ENCODE measurements at regions of chr11 and their contacts with region 1.

Region 1: DNA sequence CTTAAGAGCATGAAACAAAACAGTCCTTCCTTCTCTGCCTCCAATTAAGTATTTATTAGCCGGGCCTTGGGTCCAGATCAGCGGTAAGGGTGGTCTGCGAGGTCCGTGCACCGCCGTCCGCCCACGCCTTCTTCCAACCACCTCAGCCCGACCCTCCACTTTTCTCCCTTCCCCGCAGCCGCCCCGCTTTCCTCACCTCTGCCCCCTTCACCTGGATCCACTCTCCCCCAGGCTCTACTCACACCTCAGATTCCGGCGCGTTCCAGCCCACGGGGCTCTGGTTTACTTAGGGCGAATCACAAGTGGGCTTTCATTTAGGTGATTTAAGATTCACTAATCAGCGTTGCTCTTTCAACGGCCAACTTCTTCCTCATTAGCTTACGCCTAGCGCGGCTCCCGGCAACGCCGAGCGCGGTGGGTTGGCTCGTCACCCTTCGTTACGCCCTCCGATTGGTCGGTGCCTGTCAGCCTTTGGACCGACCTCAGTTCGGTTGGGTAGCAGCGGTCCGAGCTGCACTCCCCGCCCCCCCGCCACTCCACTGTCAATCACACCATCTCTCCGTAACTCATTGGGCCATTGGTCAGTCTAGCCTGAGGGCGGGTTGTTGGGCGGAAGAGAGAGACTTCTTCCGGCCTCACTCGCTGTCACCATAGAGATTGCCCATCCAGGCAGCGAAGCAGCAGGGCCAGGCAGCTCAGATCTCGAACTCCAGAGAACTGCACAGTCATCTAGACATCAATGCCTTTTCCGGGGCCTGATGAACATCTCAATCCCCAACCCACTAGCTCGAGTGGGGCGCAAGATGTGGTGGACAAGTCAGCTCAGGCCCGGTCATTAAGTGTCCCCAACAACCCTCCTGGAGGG is at the start of gene TMEM218:
- DNase-seq: peak; percentile 100
- H3K4me3 ChIP-seq: peak within 1 kb of the TSS; percentile 50
- H3K4me3 Mint-ChIP-seq: peak within 1 kb of the TSS; percentile 88
- H3K27ac Mint-ChIP-seq: peak within 1 kb of the TSS; percentile 90
- H3K4me1 ChIP-seq: peaks cover 6% of the 10 kb centered on the region; the same call in 1 of the 2 replicates
- H3K4me1 Mint-ChIP-seq: no peaks in the 10 kb centered on the region
- H3K27me3 ChIP-seq: no peaks in the 10 kb centered on the region
- H3K27me3 Mint-ChIP-seq: no peaks in the 10 kb centered on the region
- CTCF ChIP-seq: no peak
- total RNA-seq, gene TMEM218: 15.5 and 20.3 TPM in 2 replicates

Region 2: GRCh38 chr11:124953753-124954589 is 157.6 kb before region 1 on chr11 and contains the start of gene CCDC15:
- CTCF ChIA-PET with region 1: no interaction called
- POLR2A ChIA-PET with region 1: interaction called, 12 read pairs
- intact Hi-C with region 1: loop called (anchors 1 kb)
- DNase-seq: peak; percentile 98 to 99
- H3K4me3 ChIP-seq: peak within 1 kb of the TSS; percentile 65
- H3K4me3 Mint-ChIP-seq: no peak within 1 kb of the TSS
- H3K27ac Mint-ChIP-seq: no peak within 1 kb of the TSS
- H3K4me1 ChIP-seq: peaks cover 5% of the 10 kb centered on the region; the same call in 1 of the 2 replicates
- H3K4me1 Mint-ChIP-seq: no peaks in the 10 kb centered on the region
- H3K27me3 ChIP-seq: no peaks in the 10 kb centered on the region
- H3K27me3 Mint-ChIP-seq: no peaks in the 10 kb centered on the region
- CTCF ChIP-seq: no peak
- total RNA-seq, gene CCDC15: 4.0 TPM in 2 replicates

Region 3: GRCh38 chr11:125055107-125055715 is 56.4 kb before region 1 on chr11:
- CTCF ChIA-PET with region 1: interaction called, 3 read pairs
- POLR2A ChIA-PET with region 1: interaction called, 3 read pairs
- intact Hi-C with region 1: loop called (anchors 1 kb)
- DNase-seq: peak in 1 of 2 experiments; percentile 64
- H3K4me3 ChIP-seq: no peak overlapping the region
- H3K4me3 Mint-ChIP-seq: peak overlapping the region; percentile 11
- H3K27ac Mint-ChIP-seq: no peak overlapping the region
- H3K4me1 ChIP-seq: peaks cover 32% of the 10 kb centered on the region
- H3K4me1 Mint-ChIP-seq: peaks cover 17% of the 10 kb centered on the region
- H3K27me3 ChIP-seq: no peaks in the 10 kb centered on the region
- H3K27me3 Mint-ChIP-seq: no peaks in the 10 kb centered on the region
- CTCF ChIP-seq: no peak

Region 4: DNA sequence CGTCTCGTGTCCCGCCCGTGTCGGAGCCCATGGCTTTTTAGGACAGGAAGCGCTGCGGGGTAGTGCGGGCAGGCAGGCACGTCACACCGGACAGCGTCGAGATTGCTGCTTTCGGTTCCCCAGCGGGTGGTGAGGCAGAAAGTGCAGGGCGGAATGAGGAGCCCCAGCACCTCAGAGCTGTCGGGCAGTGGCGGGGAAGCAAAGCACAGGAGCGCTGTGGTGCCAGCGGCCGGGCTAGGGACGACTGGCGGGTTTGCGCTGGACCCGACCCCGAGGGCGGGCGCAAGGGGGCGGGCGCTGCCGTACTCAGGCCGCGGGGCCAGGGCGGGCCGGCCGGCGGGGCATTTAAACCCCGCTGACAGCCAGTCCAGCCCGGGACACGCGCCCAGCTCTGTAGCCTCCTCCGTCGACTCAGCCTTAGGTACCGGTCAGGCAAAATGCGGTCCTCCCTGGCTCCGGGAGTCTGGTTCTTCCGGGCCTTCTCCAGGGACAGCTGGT is 48.6 kb before region 1 on chr11 and contains the start of gene SLC37A2:
- CTCF ChIA-PET with region 1: interaction called, 3 read pairs
- POLR2A ChIA-PET with region 1: interaction called, 3 read pairs
- intact Hi-C with region 1: loop called (anchors 1 kb)
- DNase-seq: peak; percentile 76 to 89
- H3K4me3 ChIP-seq: peak within 1 kb of the TSS; percentile 56
- H3K4me3 Mint-ChIP-seq: peak within 1 kb of the TSS; percentile 84
- H3K27ac Mint-ChIP-seq: peak within 1 kb of the TSS; percentile 39
- H3K4me1 ChIP-seq: peaks cover 14% of the 10 kb centered on the region
- H3K4me1 Mint-ChIP-seq: peaks cover 8% of the 10 kb centered on the region
- H3K27me3 ChIP-seq: no peaks in the 10 kb centered on the region
- H3K27me3 Mint-ChIP-seq: peaks cover 3% of the 10 kb centered on the region
- CTCF ChIP-seq: peak; percentile 44 to 56
- total RNA-seq, gene SLC37A2: 11.4 and 13.8 TPM in 2 replicates

Region 5: GRCh38 chr11:125123947-125124617 is 12.5 kb after region 1 on chr11:
- CTCF ChIA-PET with region 1: interaction called, 28 read pairs
- POLR2A ChIA-PET with region 1: interaction called, 16 read pairs
- intact Hi-C with region 1: loop called (anchors 1 kb)
- DNase-seq: peak; percentile 74 to 77
- H3K4me3 ChIP-seq: peak overlapping the region; percentile 5
- H3K4me3 Mint-ChIP-seq: peak overlapping the region; percentile 55
- H3K27ac Mint-ChIP-seq: peak overlapping the region; percentile 76
- H3K4me1 ChIP-seq: peaks cover 28% of the 10 kb centered on the region
- H3K4me1 Mint-ChIP-seq: peaks cover 32% of the 10 kb centered on the region
- H3K27me3 ChIP-seq: no peaks in the 10 kb centered on the region
- H3K27me3 Mint-ChIP-seq: peaks cover 5% of the 10 kb centered on the region
- CTCF ChIP-seq: peak; percentile 67 to 80

Region 6: DNA sequence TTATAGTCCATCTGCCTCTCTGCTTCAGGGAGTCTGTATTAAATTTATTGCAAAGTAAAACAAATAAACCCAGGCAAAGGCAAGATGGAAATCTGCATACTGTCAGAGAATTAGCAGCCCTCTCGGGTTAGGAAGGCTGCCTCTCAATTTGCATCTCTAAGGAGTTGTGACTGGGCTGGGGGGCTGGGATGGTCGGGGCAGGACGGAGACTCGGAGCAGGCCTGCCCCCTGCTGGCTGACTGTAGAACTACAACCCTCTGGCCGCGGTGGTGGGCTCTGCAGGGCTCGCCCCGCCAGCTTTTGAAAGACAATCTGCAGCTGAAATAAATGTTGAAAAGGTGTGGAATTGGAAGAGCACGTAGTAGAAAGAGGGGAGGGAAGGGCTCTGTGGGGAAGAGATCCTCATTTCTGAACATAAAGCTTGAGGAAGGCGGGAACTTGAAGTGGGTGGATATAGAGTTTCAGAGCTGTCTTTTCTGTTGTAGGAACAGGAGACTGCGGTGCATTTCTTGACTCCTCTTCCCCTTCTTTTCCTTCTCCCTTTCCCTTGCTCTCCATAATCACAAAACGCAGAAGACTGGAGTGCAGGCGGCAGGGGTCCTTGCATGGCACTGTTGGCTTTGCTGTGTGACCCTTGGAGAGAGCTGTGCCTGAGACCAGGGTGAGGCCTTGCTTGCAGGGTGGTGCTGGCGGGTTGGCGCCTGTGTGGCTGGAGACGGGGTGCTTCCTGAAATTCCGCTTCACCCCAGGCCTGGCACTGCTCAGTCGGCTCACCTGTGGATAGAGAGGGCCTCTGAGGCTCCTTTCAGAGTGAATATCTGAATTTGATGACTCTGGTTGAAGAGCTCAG is 30.3 kb after region 1 on chr11:
- CTCF ChIA-PET with region 1: interaction called, 7 read pairs
- POLR2A ChIA-PET with region 1: no interaction called
- intact Hi-C with region 1: loop called (anchors 1 kb)
- DNase-seq: peak; percentile 56 to 82
- H3K4me3 ChIP-seq: no peak overlapping the region
- H3K4me3 Mint-ChIP-seq: no peak overlapping the region
- H3K27ac Mint-ChIP-seq: no peak overlapping the region
- H3K4me1 ChIP-seq: 0 out of 2 replicates have a peak, but pooled peaks cover 5% of the 10 kb centered on the region
- H3K4me1 Mint-ChIP-seq: no peaks in the 10 kb centered on the region
- H3K27me3 ChIP-seq: no peaks in the 10 kb centered on the region
- H3K27me3 Mint-ChIP-seq: peaks cover 7% of the 10 kb centered on the region
- CTCF ChIP-seq: peak; percentile 98 to 100